ENCODE measurements at regions of chr16 and their contacts with region 1.

Region 1: DNA sequence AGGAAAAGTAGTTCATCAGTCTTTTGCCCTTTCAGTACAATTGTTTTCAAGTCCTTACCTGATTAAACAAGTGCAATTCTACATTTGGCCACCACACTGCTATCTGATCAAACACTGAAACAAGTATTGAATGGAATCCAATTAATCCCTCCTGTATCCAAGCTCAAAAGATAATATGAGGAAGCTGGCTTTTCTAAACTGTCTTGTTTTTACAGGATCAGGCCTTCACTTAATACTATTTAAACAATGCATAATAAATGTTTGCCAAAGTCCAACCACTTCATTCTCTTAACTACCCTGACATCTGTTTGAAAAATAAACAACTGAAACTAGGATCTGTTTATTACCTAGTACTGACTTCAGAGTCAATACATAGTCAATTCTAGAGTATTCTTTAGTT is 131.6 kb downstream of the MRTFB start:
- DNase-seq: no peak
- ATAC-seq: peak in 1 of 4 donors; percentile 36
- H3K4me3 ChIP-seq: no peak overlapping the region
- H3K27ac ChIP-seq: no peak overlapping the region
- H3K4me1 ChIP-seq: peaks cover 21% of the 10 kb centered on the region
- H3K27me3 ChIP-seq: no peaks in the 10 kb centered on the region
- CTCF ChIP-seq: peak; percentile 40

Region 2: DNA sequence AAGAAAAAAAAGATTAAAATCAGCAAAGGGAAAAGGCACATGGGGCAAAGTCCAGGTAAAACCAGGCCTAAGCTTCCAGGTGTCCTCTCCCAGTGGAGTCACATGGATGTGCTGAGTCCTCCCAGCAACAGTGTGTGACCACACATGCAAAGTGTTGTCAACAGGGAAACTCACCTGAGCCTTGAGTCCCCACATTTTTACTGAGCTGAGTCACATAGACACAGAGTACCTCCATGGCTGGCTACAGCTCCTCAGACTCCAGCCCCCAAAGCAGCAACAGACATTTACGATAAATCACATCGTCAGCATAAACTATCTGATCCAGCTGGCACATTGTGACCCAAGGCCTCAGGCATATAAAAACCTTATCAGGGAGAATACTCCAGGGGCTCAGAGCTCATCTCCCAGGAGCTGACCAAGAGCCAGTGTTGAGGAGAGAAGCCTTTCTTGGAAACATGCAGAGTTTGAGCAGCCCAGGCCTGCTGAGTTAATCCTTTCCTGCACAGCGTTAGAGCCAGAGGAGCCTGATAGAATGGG is 262.2 kb before region 1 on chr16:
- intact Hi-C with region 1: loop called in 1 of 2 experiments (anchors 5 kb)
- DNase-seq: no peak
- ATAC-seq: no peak
- H3K4me3 ChIP-seq: no peak overlapping the region
- H3K27ac ChIP-seq: peak overlapping the region; percentile 52
- H3K4me1 ChIP-seq: peaks cover 42% of the 10 kb centered on the region
- H3K27me3 ChIP-seq: no peaks in the 10 kb centered on the region
- CTCF ChIP-seq: no peak

Region 3: GRCh38 chr16:14523632-14524031 is 320.9 kb after region 1 on chr16:
- intact Hi-C with region 1: no loop called
- DNase-seq: no peak
- ATAC-seq: peak in 1 of 4 donors; percentile 63
- H3K4me3 ChIP-seq: no peak overlapping the region
- H3K27ac ChIP-seq: peak overlapping the region; percentile 21
- H3K4me1 ChIP-seq: peaks cover 19% of the 10 kb centered on the region
- H3K27me3 ChIP-seq: no peaks in the 10 kb centered on the region
- CTCF ChIP-seq: no peak

Measured in psoas muscle (tissue), 8 donors.